A673 (cell line): ENCODE measurements at regions of chr20 and their contacts with region 1.

Region 1: DNA sequence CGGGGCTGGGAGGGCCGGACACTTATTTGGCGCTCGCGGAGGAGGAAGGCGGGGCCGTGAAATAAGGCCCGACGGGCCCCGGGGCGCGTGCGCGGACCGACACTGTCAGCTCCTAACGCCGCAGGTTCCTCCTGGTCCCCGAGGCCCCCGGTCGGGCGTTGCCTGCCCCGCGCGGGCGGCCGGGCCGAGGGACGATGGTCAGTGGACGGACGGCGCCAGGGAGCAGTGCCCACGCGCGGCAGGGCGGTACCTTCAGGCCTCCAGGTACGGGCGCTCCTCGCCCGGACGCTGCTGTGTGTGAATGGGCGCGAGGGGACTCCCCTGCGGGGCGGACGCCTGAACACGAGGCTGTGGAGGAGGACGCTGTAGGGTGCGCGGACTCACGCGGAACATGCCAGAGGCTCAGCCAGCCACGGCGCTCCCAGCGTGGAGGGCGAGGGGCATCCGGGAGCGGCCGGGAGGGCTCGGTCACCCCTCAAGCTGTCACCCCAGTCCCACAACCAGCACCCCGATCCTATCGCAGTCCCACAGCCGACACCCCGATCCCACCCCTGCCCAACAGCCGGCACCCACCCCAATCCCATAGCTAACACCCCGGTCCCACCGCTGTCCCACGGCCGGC is 339 bp upstream of the GMEB2 start:
- DNase-seq: peak; percentile 96
- H3K4me3 ChIP-seq: peak overlapping the region; percentile 73
- H3K27ac ChIP-seq: peak overlapping the region; percentile 88
- H3K4me1 ChIP-seq: peaks cover 8% of the 10 kb centered on the region
- H3K27me3 ChIP-seq: no peaks in the 10 kb centered on the region
- CTCF ChIP-seq: no peak

Region 2: GRCh38 chr20:63641792-63642544 is 14.7 kb after region 1 on chr20:
- CTCF ChIA-PET with region 1: interaction called, 7 read pairs
- POLR2A ChIA-PET with region 1: interaction called, 10 read pairs
- intact Hi-C with region 1: no loop called
- DNase-seq: peak; percentile 83
- H3K4me3 ChIP-seq: peak overlapping the region; percentile 38
- H3K27ac ChIP-seq: no peak overlapping the region
- H3K4me1 ChIP-seq: peaks cover 9% of the 10 kb centered on the region
- H3K27me3 ChIP-seq: no peaks in the 10 kb centered on the region
- CTCF ChIP-seq: peak; percentile 30